Calu3 (cell line): ENCODE measurements at regions of chr4 and their contacts with region 1.

Region 1: DNA sequence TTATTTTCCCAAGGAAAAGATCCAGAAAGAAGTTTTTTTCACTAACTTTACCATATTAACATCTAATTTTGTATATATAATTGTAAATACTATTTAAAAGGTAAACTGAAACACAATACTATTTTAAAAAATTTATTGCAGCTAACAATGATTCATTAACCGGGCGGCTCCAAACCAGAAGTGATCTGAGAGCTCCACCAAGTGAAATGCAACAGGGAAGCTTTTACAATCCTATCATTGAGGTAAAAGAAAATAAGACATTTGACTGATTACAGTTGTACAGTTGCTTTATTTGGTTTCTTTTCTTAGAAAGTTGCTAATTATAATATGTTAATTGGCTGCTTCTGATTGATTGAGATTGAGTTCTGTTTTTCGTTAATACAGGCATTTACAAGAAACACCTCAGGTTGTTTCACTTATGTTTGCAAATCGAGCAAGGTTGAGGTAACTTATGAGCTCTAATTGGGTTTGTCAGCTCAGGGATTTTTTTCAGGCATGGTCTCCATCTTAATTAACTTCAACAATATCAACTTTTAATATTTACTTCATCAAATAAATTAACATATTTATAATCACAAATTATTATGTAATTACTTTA is 220.2 kb upstream of the UGT8 start:
- DNase-seq: peak; percentile 11
- H3K4me3 Mint-ChIP-seq: no peak overlapping the region
- H3K27ac Mint-ChIP-seq: no peak overlapping the region
- H3K4me1 Mint-ChIP-seq: no peaks in the 10 kb centered on the region
- H3K27me3 Mint-ChIP-seq: no peaks in the 10 kb centered on the region
- CTCF ChIP-seq: no peak

Region 2: DNA sequence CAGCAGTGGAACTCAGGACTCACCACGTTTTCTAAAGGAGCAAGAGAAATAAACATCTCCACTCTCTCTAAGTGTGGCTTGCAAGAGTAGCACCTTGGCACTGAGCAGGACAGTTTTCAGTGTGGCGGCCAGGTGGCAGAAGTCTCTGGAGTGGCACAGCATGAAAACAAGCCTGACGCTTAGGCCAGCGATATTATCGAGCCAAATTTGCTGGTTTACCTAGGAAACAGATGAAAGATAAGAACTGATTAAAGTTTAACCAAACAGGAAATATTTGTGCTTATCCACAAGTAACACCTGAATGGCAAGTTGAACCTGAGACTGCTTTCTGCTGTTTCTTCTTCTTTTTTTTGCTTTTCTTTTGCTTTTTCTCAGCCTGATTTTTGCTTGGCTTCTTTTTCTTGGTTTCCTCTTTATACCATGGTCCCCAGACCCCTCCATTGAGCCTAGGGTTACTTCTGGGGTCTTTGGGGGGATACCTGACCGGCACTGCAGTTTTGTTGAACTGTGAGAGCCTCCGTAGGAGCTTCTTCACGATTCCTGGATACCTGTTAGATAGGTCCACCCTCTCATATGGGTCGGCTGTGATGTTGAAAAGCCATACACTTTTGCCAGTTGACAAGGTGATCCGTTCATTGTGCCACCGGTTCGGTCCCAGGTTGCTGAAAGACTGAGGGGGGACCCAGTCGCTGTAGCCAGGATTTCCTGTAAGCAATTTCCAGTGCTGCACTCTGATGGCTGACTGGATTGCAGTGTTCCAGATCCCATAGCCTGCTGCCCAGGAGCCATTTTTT is 476.2 kb before region 1 on chr4:
- CTCF ChIA-PET with region 1: no interaction called
- intact Hi-C with region 1: loop called (anchors 10 kb)
- DNase-seq: peak; percentile 74
- H3K4me3 Mint-ChIP-seq: peak overlapping the region; percentile 51
- H3K27ac Mint-ChIP-seq: peak overlapping the region; percentile 85
- H3K4me1 Mint-ChIP-seq: peaks cover 19% of the 10 kb centered on the region
- H3K27me3 Mint-ChIP-seq: no peaks in the 10 kb centered on the region
- CTCF ChIP-seq: peak; percentile 37

Region 3: DNA sequence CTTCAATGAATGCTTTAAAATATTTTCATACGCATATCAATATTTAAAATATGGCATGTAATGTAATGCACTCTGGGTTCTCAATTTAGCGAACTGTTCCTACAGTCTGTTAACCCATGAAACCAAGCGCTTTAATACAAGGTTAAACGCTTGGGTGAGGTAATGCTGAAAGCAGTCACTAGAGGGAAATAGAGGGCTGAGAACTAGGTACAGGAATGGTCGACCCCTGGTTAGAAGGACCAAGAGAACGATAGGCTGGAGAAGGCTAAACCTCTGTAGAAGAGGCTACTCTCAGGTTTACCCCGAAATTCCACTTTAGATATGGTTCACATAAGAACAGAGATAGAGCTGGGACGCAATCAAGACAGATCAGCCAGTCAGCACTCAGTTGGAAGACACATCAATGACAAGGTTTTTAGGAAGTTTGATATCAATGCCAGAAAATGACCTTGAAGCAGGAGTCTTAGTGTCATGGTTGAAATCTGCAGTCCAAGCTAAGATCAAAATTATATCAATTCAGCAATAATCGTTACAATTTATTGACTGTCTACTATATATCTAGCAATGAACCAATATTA is 425.9 kb before region 1 on chr4:
- CTCF ChIA-PET with region 1: no interaction called
- intact Hi-C with region 1: loop called (anchors 5 kb)
- DNase-seq: peak; percentile 48
- H3K4me3 Mint-ChIP-seq: no peak overlapping the region
- H3K27ac Mint-ChIP-seq: no peak overlapping the region
- H3K4me1 Mint-ChIP-seq: peaks cover 32% of the 10 kb centered on the region
- H3K27me3 Mint-ChIP-seq: no peaks in the 10 kb centered on the region
- CTCF ChIP-seq: peak; percentile 73

Region 4: DNA sequence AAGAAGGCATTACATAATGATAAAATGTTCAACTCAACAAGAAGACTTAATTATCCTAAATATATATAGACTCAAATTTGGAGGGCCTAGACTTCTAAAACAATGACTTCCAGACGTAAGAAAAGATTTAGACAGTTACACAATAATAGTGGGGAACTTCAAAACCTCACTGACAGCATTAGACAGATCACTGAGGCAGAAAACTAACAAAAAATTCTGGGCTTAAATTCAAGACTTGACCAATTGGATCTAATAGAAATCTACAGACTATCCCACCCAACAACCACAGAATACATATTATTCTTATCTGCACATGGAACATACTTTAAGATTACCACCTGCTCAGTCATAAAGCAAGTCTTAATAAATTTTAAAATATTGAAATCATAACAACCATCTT is 305.6 kb before region 1 on chr4:
- CTCF ChIA-PET with region 1: no interaction called
- intact Hi-C with region 1: loop called (anchors 5 kb)
- DNase-seq: no peak
- H3K4me3 Mint-ChIP-seq: no peak overlapping the region
- H3K27ac Mint-ChIP-seq: no peak overlapping the region
- H3K4me1 Mint-ChIP-seq: peaks cover 12% of the 10 kb centered on the region
- H3K27me3 Mint-ChIP-seq: no peaks in the 10 kb centered on the region
- CTCF ChIP-seq: no peak

Region 5: GRCh38 chr4:114208574-114209151 is 169.7 kb before region 1 on chr4:
- CTCF ChIA-PET with region 1: interaction called, 3 read pairs
- intact Hi-C with region 1: loop called (anchors 1 kb)
- DNase-seq: peak; percentile 4
- H3K4me3 Mint-ChIP-seq: no peak overlapping the region
- H3K27ac Mint-ChIP-seq: no peak overlapping the region
- H3K4me1 Mint-ChIP-seq: no peaks in the 10 kb centered on the region
- H3K27me3 Mint-ChIP-seq: no peaks in the 10 kb centered on the region
- CTCF ChIP-seq: no peak

Region 6: DNA sequence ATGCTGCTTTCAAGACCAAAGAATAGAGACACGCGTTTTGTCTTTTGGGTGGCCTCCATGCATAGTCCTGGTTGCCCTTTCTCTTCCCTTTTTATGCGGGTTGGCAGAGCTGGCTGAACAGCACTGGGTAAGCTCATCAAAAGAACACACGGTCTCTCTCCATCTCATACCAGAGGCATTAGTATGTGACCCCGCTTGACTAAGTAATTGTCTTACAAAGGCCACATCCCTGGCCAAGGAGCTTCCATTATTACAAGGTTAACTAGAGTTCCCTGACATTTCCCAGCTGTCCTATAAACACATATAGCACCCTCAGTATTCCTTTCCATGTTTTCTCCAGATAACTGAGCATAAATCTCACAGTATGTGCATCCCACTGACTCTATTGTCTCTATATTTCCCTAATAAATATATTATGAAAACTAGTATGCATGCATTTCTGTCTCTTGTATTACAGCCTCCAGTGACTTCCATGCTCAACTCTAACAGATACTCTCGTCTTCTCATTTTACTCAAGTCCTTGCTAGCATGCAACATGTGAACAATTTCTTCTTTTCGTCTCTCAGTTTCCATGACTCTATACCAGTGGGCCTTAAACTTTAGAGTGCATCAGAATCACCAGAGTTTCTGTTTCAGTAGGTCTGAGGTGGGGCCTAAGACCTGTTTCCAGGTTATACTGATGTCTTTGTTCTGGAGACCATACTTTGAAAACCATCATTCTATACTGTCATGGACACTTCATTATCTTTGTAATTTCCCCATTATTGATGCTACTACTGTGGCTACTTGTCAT is 151.2 kb before region 1 on chr4:
- CTCF ChIA-PET with region 1: no interaction called
- intact Hi-C with region 1: no loop called
- DNase-seq: no peak
- H3K4me3 Mint-ChIP-seq: no peak overlapping the region
- H3K27ac Mint-ChIP-seq: no peak overlapping the region
- H3K4me1 Mint-ChIP-seq: no peaks in the 10 kb centered on the region
- H3K27me3 Mint-ChIP-seq: no peaks in the 10 kb centered on the region
- CTCF ChIP-seq: no peak

Region 7: DNA sequence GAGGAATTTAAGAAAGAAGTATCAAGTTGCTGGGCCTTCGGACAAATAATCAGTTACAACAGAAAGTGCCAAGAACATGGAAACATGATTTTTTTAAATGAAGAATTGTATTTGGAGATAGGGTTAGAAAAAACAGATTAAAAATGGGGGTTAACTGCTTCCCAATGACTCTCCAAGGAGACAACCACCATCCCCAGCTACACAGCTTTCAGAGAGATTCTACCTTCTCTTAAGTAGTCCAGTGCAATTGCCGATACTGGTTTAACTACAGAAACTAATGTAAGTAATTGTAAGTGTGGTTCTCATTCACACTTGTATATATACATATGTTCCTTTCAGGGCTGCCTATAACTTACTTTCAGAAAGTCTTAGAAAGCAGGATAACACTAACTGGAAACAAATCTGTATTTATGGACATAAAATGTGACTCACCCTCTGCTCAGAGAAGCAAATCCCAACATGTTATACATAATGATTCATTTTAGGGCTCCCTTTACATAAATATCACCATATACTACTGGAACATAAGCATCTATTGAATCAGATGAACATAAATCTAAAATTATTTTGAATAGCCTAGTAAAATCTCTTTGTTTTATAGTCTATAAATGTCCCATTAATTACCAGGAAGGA is 28.7 kb before region 1 on chr4:
- CTCF ChIA-PET with region 1: no interaction called
- intact Hi-C with region 1: no loop called
- DNase-seq: no peak
- H3K4me3 Mint-ChIP-seq: no peak overlapping the region
- H3K27ac Mint-ChIP-seq: no peak overlapping the region
- H3K4me1 Mint-ChIP-seq: no peaks in the 10 kb centered on the region
- H3K27me3 Mint-ChIP-seq: no peaks in the 10 kb centered on the region
- CTCF ChIP-seq: no peak

Region 8: GRCh38 chr4:114773341-114773740 is 394.9 kb after region 1 on chr4:
- CTCF ChIA-PET with region 1: no interaction called
- intact Hi-C with region 1: no loop called
- DNase-seq: no peak
- H3K4me3 Mint-ChIP-seq: no peak overlapping the region
- H3K27ac Mint-ChIP-seq: no peak overlapping the region
- H3K4me1 Mint-ChIP-seq: no peaks in the 10 kb centered on the region
- H3K27me3 Mint-ChIP-seq: no peaks in the 10 kb centered on the region
- CTCF ChIP-seq: no peak